T-cell (primary cell): ENCODE measurements at regions of chr5 and their contacts with region 1.

Region 1: GRCh38 chr5:45225571-45226031 is 416.9 kb downstream of the MRPS30 start:
- DNase-seq: no peak
- ATAC-seq: no peak
- H3K4me3 ChIP-seq: no peak overlapping the region
- H3K4me3 Mint-ChIP-seq: no peak overlapping the region
- H3K27ac ChIP-seq: no peak overlapping the region
- H3K27ac Mint-ChIP-seq: no peak overlapping the region
- H3K4me1 ChIP-seq: no peaks in the 10 kb centered on the region
- H3K4me1 Mint-ChIP-seq: no peaks in the 10 kb centered on the region
- H3K27me3 ChIP-seq: no peaks in the 10 kb centered on the region
- H3K27me3 Mint-ChIP-seq: no peaks in the 10 kb centered on the region

Region 2: DNA sequence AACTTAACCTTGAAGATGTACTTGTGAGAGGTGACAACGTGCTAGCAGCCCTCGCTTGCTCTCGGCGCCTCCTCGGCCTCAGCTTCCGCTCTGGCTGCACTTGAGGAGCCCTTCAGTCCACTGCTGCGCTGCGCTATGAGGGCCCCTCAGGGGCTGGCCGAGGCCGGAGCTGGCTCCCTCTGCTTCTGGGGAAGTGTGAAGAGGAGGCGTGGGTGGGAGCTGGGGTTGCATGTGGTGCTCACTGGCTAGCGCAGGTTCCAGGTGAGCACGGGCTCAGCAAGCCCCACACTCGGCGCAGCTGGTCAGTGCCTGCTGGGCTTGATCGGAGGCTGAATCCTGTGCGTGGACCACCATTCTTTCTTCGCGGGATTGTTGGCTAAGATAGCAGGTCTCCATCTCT is 250.8 kb before region 1 on chr5:
- CTCF ChIA-PET with region 1: no interaction called
- POLR2A ChIA-PET with region 1: no interaction called
- DNase-seq: no peak
- ATAC-seq: no peak
- H3K4me3 ChIP-seq: no peak overlapping the region
- H3K4me3 Mint-ChIP-seq: no peak overlapping the region
- H3K27ac ChIP-seq: no peak overlapping the region
- H3K27ac Mint-ChIP-seq: no peak overlapping the region
- H3K4me1 ChIP-seq: no peaks in the 10 kb centered on the region
- H3K4me1 Mint-ChIP-seq: no peaks in the 10 kb centered on the region
- H3K27me3 ChIP-seq: no peaks in the 10 kb centered on the region
- H3K27me3 Mint-ChIP-seq: no peaks in the 10 kb centered on the region

Region 3: DNA sequence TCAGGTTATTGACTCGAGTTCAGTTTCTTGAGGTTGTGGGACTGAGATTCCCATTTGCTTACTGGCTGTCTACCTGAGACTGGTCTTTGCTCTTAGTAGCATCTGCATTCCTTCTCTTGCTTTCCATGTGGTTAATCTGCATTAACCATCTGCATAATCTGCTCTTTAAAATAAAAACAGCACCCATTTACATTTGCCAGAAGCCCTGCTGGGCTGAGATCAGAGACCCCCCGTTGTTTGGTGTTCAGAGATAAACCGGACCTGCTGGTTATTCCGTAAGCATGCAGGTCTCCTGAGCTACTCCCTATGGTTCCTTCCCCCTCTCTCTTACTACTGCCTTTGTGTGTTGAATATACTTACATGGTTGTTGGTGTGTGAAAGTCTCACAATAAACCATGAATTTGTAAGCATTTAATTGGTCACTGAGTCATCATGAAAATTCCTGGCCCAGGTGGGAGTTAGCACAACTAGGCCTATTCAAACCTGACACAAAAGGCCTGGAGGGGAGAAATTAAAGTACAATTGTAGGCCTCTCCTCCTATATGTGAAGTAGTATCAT is 20.1 kb before region 1 on chr5:
- CTCF ChIA-PET with region 1: interaction called in 1 of 2 experiments, 10 read pairs
- POLR2A ChIA-PET with region 1: no interaction called
- DNase-seq: no peak
- ATAC-seq: no peak
- H3K4me3 ChIP-seq: no peak overlapping the region
- H3K4me3 Mint-ChIP-seq: no peak overlapping the region
- H3K27ac ChIP-seq: no peak overlapping the region
- H3K27ac Mint-ChIP-seq: no peak overlapping the region
- H3K4me1 ChIP-seq: no peaks in the 10 kb centered on the region
- H3K4me1 Mint-ChIP-seq: no peaks in the 10 kb centered on the region
- H3K27me3 ChIP-seq: no peaks in the 10 kb centered on the region
- H3K27me3 Mint-ChIP-seq: no peaks in the 10 kb centered on the region

Region 4: GRCh38 chr5:45260292-45260691 is 34.7 kb after region 1 on chr5:
- CTCF ChIA-PET with region 1: no interaction called
- POLR2A ChIA-PET with region 1: no interaction called
- DNase-seq: no peak
- ATAC-seq: no peak
- H3K4me3 ChIP-seq: no peak overlapping the region
- H3K4me3 Mint-ChIP-seq: no peak overlapping the region
- H3K27ac ChIP-seq: no peak overlapping the region
- H3K27ac Mint-ChIP-seq: no peak overlapping the region
- H3K4me1 ChIP-seq: no peaks in the 10 kb centered on the region
- H3K4me1 Mint-ChIP-seq: no peaks in the 10 kb centered on the region
- H3K27me3 ChIP-seq: no peaks in the 10 kb centered on the region
- H3K27me3 Mint-ChIP-seq: no peaks in the 10 kb centered on the region